Right ventricle myocardium inferior (tissue), 1 donor: ENCODE measurements at regions of chr18 and their contacts with region 1.

Region 1: DNA sequence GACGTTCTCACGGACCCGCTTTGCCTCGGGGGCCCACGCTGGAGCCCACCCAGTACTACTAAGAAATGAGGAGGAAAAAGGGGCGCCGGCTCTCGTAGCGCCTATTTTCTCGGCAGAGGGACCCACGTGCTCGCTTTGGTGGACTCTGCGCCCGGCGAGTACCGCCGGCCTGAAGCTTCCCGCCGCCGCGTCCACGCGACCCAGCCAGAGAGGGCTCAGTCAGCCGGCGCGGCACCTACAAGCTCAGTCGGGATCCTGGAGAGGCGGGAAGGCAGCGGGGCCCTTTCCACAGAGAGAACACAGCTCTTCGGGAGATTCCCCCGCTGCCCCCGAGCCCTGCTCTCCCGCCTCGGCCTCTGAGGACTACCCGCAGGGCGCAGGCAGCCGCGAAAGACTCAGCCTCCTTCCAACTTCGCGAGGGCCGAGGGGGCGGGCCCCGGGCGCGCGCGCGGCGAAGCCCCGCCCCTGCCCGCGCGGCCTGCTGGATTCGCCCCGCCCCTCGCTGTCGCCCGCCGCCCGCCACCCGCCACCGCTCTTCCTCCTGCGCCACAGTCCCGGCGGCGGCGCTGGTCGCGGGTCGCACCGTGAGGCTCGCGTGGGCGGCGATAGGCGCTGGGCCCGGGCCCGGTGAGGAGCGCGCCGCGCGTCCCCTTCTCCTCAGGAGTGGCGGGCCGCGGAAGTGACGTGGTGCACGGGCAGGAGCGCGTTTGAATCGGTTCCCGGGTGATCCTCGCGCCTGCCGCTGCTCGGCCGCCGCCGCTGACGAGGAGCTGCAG is at the start of gene SMCHD1:
- DNase-seq: peak; percentile 97
- ATAC-seq: peak; percentile 92
- total RNA-seq, gene SMCHD1: 25.2 TPM

Region 2: GRCh38 chr18:1965016-1965415 is 690.4 kb before region 1 on chr18:
- intact Hi-C with region 1: no loop called
- DNase-seq: no peak
- ATAC-seq: no peak

Region 3: DNA sequence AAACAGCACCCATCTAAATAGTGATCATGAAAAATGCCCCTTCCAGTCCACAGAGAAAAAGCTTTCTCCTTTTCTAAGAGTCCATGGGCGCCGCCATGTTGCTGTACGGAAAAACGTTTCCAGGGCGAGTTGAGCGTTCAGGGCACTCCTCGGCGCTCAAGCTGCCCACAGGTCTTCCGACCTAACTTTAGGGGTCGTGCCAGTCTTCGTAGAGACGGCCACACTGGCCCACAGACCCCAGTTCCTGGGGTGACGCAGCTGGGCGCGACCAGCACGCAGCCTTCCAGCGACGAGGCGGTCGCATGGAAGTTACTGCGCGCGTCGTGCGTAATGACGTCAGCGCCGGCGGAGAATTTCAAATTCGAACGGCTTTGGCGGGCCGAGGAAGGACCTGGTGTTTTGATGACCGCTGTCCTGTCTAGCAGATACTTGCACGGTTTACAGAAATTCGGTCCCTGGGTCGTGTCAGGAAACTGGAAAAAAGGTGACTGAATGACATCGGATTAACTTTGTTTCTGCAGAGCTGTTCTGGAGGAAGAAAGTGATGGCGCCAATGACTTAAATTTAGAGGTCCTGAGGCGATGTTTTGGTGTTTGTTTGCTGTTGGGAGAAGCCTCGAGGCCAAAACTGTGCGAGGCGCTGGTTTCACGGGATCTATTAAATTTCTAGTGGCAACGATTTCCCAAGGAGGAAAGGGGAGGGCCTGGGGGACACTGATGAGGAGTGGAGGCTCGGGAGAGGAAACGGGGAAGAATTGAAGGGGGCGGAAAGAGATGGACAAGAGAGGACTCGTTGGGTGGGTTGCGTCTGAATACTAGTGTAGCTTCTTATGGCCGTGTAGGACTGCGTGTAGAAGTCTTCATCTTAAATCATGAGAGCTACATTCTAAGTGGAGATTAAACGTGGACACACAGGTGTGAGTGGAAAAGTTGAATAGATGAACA is 83.9 kb before region 1 on chr18 and contains the starts of genes METTL4 and NDC80:
- intact Hi-C with region 1: loop called (anchors 1 kb)
- DNase-seq: peak; percentile 94
- ATAC-seq: peak; percentile 93
- total RNA-seq, gene METTL4: 7.3 TPM
- total RNA-seq, gene NDC80: 0.54 TPM